Psoas muscle (tissue), 8 donors: ENCODE measurements at regions of chr20 and their contacts with region 1.

Region 1: GRCh38 chr20:371755-372542 is 8.6 kb upstream of the TRIB3 start:
- DNase-seq: peak; percentile 85 to 90
- ATAC-seq: peak; percentile 89 to 93 (median 90)
- H3K4me3 ChIP-seq: no peak overlapping the region
- H3K27ac ChIP-seq: peak overlapping the region; percentile 78
- H3K4me1 ChIP-seq: peaks cover 22% of the 10 kb centered on the region
- H3K27me3 ChIP-seq: no peaks in the 10 kb centered on the region
- CTCF ChIP-seq: no peak

Region 2: DNA sequence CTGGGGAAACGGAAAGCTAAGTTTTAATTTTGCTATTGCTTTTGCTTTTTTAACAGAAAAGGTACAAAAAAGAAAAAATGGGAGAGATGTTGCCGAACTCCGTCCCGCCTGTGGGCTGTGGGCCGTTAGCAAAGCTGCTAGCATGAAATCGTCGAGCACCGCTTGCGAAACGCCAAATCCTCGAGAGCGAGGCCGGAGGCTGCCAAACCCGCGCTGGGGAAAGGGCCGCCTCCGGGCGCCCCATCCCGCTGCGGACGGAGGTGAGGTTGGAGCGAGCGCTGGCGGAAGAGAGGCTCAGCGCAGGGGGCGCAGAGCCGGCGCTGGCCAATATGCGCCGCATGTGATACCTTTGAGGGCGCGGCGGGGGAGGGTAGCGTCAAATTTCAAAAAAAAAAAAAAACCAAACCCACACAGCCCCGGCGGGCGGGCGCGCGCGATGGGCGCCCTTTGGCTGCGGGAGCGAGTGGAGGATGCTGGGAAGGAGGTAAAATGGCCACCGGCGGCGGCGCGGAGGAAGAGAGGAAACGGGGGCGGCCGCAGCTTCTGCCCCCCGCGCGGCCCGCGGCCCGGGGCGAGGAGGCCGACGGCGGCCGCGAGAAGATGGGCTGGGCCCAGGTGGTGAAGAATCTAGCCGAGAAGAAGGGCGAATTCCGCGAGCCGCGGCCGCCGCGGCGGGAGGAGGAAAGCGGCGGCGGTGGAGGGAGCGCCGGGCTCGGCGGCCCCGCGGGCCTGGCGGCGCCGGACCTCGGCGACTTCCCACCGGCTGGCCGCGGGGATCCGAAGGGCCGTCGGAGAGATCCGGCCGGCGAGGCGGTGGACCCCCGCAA is 74.6 kb before region 1 on chr20 and contains the start of gene ZCCHC3:
- intact Hi-C with region 1: no loop called
- DNase-seq: peak; percentile 92 to 95
- ATAC-seq: peak; percentile 86 to 92 (median 88)
- H3K4me3 ChIP-seq: peak within 1 kb of the TSS; percentile 99
- H3K27ac ChIP-seq: peak within 1 kb of the TSS; percentile 96
- H3K4me1 ChIP-seq: peaks cover 33% of the 10 kb centered on the region
- H3K27me3 ChIP-seq: no peaks in the 10 kb centered on the region
- CTCF ChIP-seq: peak; percentile 21
- total RNA-seq, gene ZCCHC3: 9.3 to 10.2 (median 9.5) TPM

Region 3: DNA sequence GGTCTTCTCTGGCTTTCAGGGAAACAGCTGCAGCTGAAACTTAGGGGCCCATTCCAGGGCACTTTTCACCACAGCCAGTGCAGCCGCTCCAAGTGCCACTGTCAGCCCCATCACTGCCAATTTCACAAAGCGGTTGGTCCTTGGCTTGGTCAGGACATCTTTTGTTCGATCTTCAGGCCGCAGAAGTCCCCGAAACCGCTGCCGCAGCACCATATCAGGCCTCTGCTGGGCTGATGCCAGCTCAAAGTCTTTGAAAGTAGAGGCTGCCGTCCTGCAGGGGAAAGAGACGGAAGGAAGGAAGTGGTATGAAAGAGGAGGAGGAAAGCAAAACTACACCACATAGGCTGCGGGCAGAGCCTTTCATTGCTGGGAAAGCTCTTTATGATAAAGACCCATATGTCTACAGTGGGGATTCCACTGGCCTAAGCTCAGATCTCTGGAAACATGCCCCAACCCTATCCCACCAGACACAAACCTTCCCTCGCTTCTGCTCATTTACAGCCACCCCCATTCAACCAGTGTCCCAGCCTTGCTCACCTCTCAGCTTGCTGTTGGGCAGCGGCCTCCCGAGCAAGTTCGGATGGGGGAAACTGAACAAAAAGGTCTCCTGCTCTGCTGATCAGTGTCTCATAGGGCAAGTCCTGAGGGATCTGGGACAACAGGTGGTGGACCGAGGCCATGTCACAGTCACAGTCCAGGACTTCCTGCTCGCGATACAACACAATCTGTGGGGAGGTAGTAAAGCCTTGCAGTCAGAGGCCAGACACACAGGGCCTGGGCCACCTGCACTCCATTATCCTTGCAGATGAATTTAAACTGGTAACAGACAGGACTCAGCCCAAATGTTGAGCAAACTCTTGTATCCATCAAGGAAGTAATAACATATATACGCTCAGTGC is 66.9 kb after region 1 on chr20:
- intact Hi-C with region 1: loop called in 1 of 2 experiments (anchors 5 kb)
- DNase-seq: no peak
- ATAC-seq: peak; percentile 11 to 21 (median 18)
- H3K4me3 ChIP-seq: no peak overlapping the region
- H3K27ac ChIP-seq: peak overlapping the region; percentile 44
- H3K4me1 ChIP-seq: peaks cover 30% of the 10 kb centered on the region
- H3K27me3 ChIP-seq: no peaks in the 10 kb centered on the region
- CTCF ChIP-seq: no peak